ENCODE measurements at regions of chr5 and their contacts with region 1.

Region 1: DNA sequence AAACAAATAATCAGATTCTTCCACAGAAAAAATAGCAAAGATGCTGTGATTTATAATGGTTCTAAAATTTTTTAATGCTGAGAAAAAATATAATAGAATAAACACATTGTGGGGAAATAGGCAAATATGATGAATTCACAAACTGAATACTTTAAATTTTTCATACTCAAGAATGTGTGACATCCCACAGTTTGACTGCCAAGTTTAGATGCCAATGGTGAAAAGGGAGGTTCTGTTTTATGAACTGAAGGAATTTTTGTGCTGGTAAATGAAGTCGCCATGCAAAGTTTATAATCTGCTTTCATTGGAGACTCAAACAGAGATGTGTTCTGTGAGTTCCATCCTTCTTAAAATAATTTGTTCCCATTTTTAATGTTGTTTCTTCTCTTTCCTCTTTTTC is 367.5 kb upstream of the ADAMTS16 start:
- DNase-seq: no peak
- H3K4me3 ChIP-seq: no peak overlapping the region
- H3K27ac ChIP-seq: no peak overlapping the region
- H3K4me1 ChIP-seq: no peaks in the 10 kb centered on the region
- H3K27me3 ChIP-seq: no peaks in the 10 kb centered on the region
- CTCF ChIP-seq: no peak

Region 2: DNA sequence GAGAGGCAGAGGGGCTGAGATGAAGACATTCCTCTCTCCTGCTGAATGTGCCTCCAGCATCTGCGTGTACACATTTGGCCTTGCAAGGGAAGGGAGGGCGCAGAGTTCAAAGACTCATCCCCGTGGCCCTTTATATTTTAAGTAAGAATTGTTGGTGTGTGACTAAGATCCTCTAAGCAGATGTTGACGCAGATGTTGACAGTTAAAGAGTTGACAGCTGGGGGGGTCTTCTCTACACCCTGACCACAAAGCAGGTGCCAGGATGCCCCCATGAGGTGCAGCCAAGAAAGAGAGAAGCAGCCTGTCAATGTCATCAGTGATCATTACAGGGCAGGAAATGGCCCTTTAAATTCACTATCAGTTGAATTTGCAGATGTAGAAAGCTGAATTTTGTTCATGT is 914.1 kb before region 1 on chr5:
- CTCF ChIA-PET with region 1: no interaction called
- dilution Hi-C with region 1: no loop called
- in situ Hi-C with region 1: no loop called
- intact Hi-C with region 1: no loop called
- DNase-seq: no peak
- H3K4me3 ChIP-seq: no peak overlapping the region
- H3K27ac ChIP-seq: no peak overlapping the region
- H3K4me1 ChIP-seq: peaks cover 5% of the 10 kb centered on the region
- H3K27me3 ChIP-seq: no peaks in the 10 kb centered on the region
- CTCF ChIP-seq: no peak

Region 3: GRCh38 chr5:4716781-4717180 is 55.8 kb before region 1 on chr5:
- CTCF ChIA-PET with region 1: no interaction called
- dilution Hi-C with region 1: loop called (anchors 5 kb)
- in situ Hi-C with region 1: no loop called
- intact Hi-C with region 1: no loop called
- DNase-seq: no peak
- H3K4me3 ChIP-seq: no peak overlapping the region
- H3K27ac ChIP-seq: no peak overlapping the region
- H3K4me1 ChIP-seq: no peaks in the 10 kb centered on the region
- H3K27me3 ChIP-seq: no peaks in the 10 kb centered on the region
- CTCF ChIP-seq: no peak

Measured in mammary epithelial cell (primary cell).